ENCODE measurements at regions of chr12 and their contacts with region 1.

Region 1: DNA sequence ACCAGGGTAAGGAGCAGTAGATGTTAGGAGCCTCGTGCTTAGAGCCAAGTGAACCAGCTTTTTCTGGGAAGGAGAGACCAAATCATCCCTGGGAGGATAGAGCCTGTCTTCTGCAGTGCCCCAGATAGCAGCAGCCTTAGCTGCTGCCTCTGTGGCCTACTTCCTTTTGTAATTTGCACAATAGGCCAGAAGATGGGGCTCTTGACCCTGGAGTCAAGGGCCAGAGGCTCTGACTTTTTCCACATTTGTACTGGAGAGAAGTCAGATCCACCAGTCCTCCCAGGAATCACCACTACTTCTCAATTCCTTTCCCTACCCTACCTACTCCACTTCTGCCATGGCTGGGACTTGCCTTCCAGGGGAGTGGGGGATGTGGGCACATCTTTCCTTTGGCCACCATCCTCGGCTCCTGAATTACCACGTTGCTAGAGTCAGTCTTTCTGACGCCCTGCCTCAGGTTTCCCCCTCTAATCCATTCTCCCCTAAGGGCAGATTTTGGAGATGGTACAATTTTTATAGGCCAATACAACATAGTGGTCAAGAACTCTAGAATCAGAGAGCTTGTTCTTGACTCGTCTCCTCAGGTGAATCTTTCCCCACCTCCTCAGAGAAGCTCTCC is 3.3 kb upstream of the SLC4A8 start:
- DNase-seq: peak; percentile 64
- H3K4me3 ChIP-seq: no peak overlapping the region
- H3K27ac ChIP-seq: no peak overlapping the region
- H3K4me1 ChIP-seq: peaks cover 6% of the 10 kb centered on the region
- CTCF ChIP-seq: peak; percentile 80

Region 2: DNA sequence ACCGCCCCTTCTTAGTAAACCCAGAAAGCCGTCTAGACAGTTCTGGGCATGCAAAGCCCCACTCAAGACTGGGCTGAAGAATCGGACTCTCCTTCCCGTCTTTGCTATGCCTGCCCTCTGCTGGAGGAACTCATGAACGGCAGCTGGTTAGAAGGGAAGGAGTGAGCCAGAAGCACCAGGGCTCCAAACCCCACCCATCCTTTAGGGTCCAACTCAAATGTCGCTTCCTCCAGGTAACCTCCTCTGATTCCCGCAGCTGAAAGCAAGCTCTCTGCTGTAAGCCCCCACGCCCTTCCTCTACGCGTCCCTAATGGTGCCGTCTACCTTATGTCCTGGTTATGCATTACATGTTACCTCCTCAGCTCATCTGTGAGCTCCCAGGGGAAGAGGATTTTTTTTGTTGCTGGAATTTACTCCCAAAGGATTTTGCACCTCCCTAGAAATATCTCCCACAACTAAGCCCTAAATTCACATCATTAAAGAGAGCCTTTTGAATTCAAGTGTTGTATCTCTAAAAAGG is 110.7 kb after region 1 on chr12:
- CTCF ChIA-PET with region 1: interaction called, 10 read pairs
- POLR2A ChIA-PET with region 1: no interaction called
- intact Hi-C with region 1: loop called (anchors 1 kb)
- DNase-seq: peak; percentile 71
- H3K4me3 ChIP-seq: no peak overlapping the region
- H3K27ac ChIP-seq: no peak overlapping the region
- H3K4me1 ChIP-seq: no peaks in the 10 kb centered on the region
- CTCF ChIP-seq: peak; percentile 89

Region 3: DNA sequence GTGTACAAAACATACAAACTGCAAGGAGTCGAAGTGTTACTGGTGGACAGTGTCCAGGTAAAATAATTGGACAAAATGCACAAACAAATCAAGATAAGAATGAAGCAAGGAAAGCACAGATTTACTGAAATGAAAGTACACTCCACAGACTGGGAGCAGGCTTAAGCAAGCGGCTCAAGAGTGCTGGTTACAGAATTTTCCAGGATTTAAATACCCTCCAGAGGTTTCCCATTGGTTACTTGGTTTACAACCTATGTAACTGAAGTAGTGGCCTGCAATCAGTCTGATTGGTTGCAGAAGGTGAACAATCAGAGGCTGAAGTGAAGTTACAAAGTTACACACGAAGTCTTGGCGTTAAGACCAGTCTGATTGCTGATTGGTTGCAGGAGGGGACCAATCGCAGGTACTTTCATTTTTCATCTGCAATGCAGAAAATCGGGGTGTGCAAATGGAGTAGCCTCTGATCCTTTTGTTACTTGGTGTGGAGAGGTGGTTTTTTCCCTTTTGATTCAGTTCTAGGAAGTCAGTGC is 158.0 kb after region 1 on chr12:
- CTCF ChIA-PET with region 1: no interaction called
- POLR2A ChIA-PET with region 1: no interaction called
- intact Hi-C with region 1: no loop called
- DNase-seq: no peak
- H3K4me3 ChIP-seq: no peak overlapping the region
- H3K27ac ChIP-seq: no peak overlapping the region
- H3K4me1 ChIP-seq: no peaks in the 10 kb centered on the region
- CTCF ChIP-seq: no peak

Region 4: GRCh38 chr12:51590347-51591019 is 169.1 kb after region 1 on chr12:
- CTCF ChIA-PET with region 1: no interaction called
- POLR2A ChIA-PET with region 1: no interaction called
- intact Hi-C with region 1: loop called (anchors 2 kb)
- DNase-seq: peak; percentile 90
- H3K4me3 ChIP-seq: peak overlapping the region; percentile 66
- H3K27ac ChIP-seq: no peak overlapping the region
- H3K4me1 ChIP-seq: peaks cover 8% of the 10 kb centered on the region
- CTCF ChIP-seq: no peak; the same call in 1 of the 2 replicates

Region 5: DNA sequence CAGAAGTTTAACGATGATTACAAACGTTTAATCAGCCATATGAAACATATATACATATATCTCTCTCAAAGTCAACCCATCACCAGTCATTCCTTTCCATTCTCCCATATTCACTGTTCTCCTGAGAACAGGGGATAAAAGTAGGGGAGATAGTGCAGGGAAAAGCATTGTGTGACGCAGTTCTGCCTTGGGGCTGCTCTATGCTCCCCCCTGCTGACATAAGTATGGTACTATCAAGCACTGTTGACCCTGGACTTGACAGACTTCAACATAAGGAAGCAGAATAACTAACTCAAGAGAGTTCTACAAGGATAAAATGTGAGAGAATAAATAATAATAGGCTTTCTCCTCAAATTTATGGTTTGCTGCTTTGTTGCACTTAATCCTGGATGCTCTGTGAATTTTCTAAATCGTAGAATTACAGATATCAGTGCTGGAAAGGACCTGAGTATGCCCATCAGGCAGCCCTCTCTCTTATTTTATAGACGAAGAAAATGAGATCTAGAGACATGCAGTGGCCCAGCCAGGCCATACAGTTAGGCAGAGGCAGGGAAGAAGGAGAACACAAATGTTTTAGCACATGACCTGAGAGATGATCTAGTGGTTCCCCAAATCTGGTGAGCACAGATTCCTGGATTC is 256.8 kb after region 1 on chr12:
- CTCF ChIA-PET with region 1: no interaction called
- POLR2A ChIA-PET with region 1: no interaction called
- intact Hi-C with region 1: loop called (anchors 2 kb)
- DNase-seq: peak; percentile 40
- H3K4me3 ChIP-seq: no peak overlapping the region
- H3K27ac ChIP-seq: no peak overlapping the region
- H3K4me1 ChIP-seq: no peaks in the 10 kb centered on the region
- CTCF ChIP-seq: peak; percentile 79

Region 6: GRCh38 chr12:51823875-51824565 is 402.6 kb after region 1 on chr12:
- CTCF ChIA-PET with region 1: no interaction called
- POLR2A ChIA-PET with region 1: no interaction called
- intact Hi-C with region 1: loop called (anchors 1 kb)
- DNase-seq: peak; percentile 39
- H3K4me3 ChIP-seq: no peak overlapping the region
- H3K27ac ChIP-seq: no peak overlapping the region
- H3K4me1 ChIP-seq: no peaks in the 10 kb centered on the region
- CTCF ChIP-seq: peak; percentile 68

Region 7: GRCh38 chr12:51871126-51871525 is 449.8 kb after region 1 on chr12:
- CTCF ChIA-PET with region 1: interaction called, 3 read pairs
- POLR2A ChIA-PET with region 1: no interaction called
- intact Hi-C with region 1: loop called (anchors 2 kb)
- DNase-seq: no peak
- H3K4me3 ChIP-seq: no peak overlapping the region
- H3K27ac ChIP-seq: no peak overlapping the region
- H3K4me1 ChIP-seq: no peaks in the 10 kb centered on the region
- CTCF ChIP-seq: peak; percentile 26; the same call in 1 of the 2 replicates

Measured in OCI-LY7 (cell line).